CD4-positive, alpha-beta memory T cell (primary cell): ENCODE measurements at regions of chr6 and their contacts with region 1.

Region 1: GRCh38 chr6:99434702-99435530 is 9.8 kb upstream of the PNISR start:
- DNase-seq: peak in 4 of 5 donors; percentile 12 to 22 (median 18)
- H3K4me3 ChIP-seq: no peak overlapping the region
- H3K4me3 Mint-ChIP-seq: no peak overlapping the region
- H3K27ac ChIP-seq: no peak overlapping the region
- H3K27ac Mint-ChIP-seq: no peak overlapping the region
- H3K4me1 ChIP-seq: no peaks in the 10 kb centered on the region
- H3K4me1 Mint-ChIP-seq: peaks cover 0 to 3% (median 1%) of the 10 kb centered on the region in 4 donors
- H3K27me3 ChIP-seq: no peaks in the 10 kb centered on the region
- H3K27me3 Mint-ChIP-seq: no peaks in the 10 kb centered on the region

Region 2: GRCh38 chr6:99416892-99417767 is 17.8 kb before region 1 on chr6:
- CTCF ChIA-PET with region 1: interaction called, 11 read pairs
- POLR2A ChIA-PET with region 1: no interaction called
- intact Hi-C with region 1: no loop called
- DNase-seq: no peak
- H3K4me3 ChIP-seq: no peak overlapping the region
- H3K4me3 Mint-ChIP-seq: peak overlapping the region; percentile 38 to 71 (median 54)
- H3K27ac ChIP-seq: no peak overlapping the region
- H3K27ac Mint-ChIP-seq: peak overlapping the region in 5 of 7 donors; percentile 22 to 57 (median 50)
- H3K4me1 ChIP-seq: peaks cover 73% of the 10 kb centered on the region
- H3K4me1 Mint-ChIP-seq: peaks cover 42 to 75% (median 57%) of the 10 kb centered on the region in 4 donors
- H3K27me3 ChIP-seq: no peaks in the 10 kb centered on the region
- H3K27me3 Mint-ChIP-seq: no peaks in the 10 kb centered on the region

Region 3: DNA sequence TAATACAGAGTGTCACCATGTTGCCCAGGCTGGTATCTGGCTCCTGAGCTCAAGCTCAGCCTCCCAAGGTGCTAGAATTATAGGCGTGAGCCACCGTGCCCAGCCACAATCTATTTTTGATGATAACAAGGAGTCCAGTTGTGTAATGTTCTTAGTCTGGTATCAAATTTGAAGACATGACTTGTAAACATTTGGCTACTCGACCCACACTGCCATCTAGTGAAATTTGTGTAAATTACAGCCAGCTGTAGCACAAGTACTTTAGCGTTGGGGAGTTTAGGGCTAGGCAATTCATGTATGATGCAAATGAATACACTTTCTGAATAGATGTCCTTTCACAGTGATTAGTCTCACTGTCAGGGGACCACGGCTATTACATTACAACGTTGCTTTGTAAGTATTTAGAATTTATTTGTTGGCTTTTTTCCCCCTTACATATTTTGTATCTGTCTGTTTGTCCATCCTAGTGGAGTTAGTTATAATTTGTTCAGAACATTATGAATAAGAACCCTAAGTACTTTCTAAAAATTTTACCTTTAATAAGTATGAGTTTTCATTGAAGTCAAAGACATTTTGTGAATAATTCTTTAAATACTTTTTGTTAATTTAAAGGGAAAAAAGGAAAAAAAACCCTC is 311.5 kb after region 1 on chr6:
- CTCF ChIA-PET with region 1: interaction called, 8 read pairs
- POLR2A ChIA-PET with region 1: no interaction called
- intact Hi-C with region 1: loop called (anchors 1 kb)
- DNase-seq: peak; percentile 57 to 64 (median 62)
- H3K4me3 ChIP-seq: no peak overlapping the region
- H3K4me3 Mint-ChIP-seq: no peak overlapping the region
- H3K27ac ChIP-seq: no peak overlapping the region
- H3K27ac Mint-ChIP-seq: no peak overlapping the region
- H3K4me1 ChIP-seq: no peaks in the 10 kb centered on the region
- H3K4me1 Mint-ChIP-seq: no peaks in the 10 kb centered on the region
- H3K27me3 ChIP-seq: peaks cover 3% of the 10 kb centered on the region
- H3K27me3 Mint-ChIP-seq: peaks cover 5 to 20% of the 10 kb centered on the region in 2 donors